Posterior vena cava (tissue), 2 donors: ENCODE measurements at regions of chr2 and their contacts with region 1.

Region 1: GRCh38 chr2:238370823-238371372 is 50.6 kb downstream of the TRAF3IP1 start:
- DNase-seq: no peak

Region 2: GRCh38 chr2:236919209-236919608 is 1451.7 kb before region 1 on chr2:
- intact Hi-C with region 1: no loop called
- DNase-seq: no peak

Region 3: GRCh38 chr2:238288650-238289573 is 82.0 kb before region 1 on chr2:
- intact Hi-C with region 1: no loop called
- DNase-seq: peak; percentile 100

Region 4: GRCh38 chr2:238426568-238427434 is 55.9 kb after region 1 on chr2 and contains the start of gene ASB1:
- intact Hi-C with region 1: loop called in 1 of 2 experiments (anchors 10 kb)
- DNase-seq: peak; percentile 94
- total RNA-seq, gene ASB1: 36.3 to 39.7 TPM

Region 5: DNA sequence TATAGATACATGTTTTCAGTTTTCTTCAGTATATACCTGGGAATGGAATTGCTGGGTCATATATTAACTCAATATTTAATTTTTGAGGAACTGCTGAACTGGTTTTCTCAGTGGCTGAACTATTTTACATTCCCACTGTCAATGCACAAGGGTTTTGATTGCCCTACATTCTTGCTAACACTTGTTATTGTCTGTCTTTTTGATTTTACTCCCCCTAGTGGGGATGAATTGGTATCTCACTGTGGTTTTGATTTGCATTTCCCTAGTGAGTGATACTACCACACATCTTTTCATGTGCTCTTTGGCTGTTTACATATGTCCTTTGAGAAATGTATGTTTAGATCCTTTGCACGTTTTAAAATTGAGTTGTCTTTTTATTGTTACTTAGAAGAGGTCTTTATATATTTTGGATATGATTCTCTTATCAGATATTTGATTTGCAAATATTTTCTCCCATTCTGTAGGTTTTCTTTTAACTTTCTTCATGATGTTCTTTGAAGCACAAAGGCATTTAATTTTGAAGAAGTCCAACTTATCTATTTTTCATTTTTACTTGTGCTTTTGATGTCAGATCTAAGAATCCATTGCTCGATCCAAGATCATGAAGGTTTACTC is 92.0 kb after region 1 on chr2:
- intact Hi-C with region 1: loop called in 1 of 2 experiments (anchors 10 kb)
- DNase-seq: no peak

Region 6: DNA sequence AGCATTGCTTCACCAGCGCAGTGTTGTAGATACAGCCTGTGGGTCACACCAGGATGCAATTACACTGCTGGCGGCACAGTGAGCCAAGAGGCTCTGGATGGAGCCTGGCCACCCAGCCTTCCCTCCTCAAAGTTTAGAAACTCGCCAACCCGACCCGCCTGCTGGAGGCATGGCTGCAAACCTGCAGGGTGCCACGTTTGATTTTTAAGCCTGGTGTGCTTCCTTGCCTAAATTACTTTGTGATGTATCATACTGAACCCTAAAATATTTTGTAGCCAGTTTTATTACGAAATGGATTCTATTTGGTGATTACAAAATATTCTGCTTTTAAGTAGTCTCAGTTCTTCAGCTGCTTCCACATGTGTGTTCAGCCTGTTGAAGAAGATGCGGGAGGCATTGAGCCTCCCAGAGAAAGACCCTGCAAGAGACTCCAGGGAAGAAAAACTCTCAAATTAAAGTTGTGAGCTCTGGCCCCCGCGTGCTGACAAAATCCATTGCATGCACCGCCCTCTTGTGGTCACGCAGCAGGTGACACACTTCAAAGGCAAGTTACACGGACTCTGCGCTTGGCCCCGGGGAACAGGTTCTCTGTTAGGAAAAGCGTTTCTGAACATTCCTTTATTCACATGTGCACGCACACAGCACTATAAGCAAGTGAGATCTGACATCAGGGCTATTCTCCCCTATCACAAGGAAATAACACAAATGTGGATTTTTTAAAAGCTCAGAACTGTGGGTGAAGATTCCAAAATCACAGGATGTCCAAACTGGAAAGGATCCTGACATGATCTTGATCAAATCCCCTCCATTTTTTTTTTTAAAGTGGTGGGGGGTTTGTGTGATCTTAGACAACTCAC is 414.0 kb after region 1 on chr2:
- intact Hi-C with region 1: loop called in 1 of 2 experiments (anchors 10 kb)
- DNase-seq: peak; percentile 92